ENCODE measurements at regions of chr6 and their contacts with region 1.

Region 1: DNA sequence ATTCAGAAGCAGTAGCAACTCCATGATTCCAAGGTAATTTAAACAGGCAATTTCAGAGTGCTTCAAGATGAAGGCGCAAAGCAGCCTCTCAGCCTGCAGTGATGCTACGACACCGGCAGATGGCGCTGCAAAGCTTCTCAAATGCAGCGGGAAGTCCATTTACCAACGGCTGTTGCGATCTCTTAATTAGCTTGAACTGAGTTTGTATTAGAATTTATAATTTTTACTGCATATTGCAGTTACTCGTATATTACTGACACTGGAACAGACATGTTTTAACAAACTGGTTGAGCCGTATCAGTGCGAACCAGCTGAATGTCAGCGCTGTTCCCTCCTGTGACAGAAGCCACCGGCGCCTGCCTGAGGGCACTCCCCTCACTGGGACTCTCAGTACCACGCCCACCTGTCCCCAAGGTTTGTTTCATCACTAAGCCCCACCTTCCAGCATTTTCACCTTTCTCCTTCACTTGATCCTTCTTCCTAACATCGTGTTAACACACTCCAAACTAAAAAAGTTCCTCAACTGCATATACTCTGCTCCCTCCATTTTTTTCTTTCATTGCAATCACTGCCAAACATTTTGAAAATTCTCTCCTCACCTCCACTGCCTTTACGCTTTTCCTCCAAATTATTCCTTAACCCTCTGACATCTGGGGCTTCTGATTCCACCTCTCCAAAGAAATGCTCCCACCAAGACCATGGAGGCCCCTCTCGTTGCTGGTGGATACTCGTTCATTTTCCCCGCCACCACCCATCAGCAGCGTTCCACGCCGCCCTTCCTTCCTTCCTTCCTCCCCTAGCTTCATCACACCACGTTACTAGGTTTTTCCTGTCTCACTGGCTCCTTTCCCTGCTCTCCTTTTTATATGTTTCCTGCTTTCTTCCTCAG is 14.5 kb downstream of the GNL1 start:
- DNase-seq: peak; percentile 88
- ATAC-seq: peak; percentile 72

Region 2: GRCh38 chr6:30483677-30484279 is 58.0 kb before region 1 on chr6:
- intact Hi-C with region 1: loop called (anchors 1 kb)
- DNase-seq: no peak
- ATAC-seq: no peak

Region 3: GRCh38 chr6:30599625-30600324 is 58.0 kb after region 1 on chr6:
- intact Hi-C with region 1: loop called (anchors 5 kb)
- DNase-seq: no peak
- ATAC-seq: no peak

Region 4: DNA sequence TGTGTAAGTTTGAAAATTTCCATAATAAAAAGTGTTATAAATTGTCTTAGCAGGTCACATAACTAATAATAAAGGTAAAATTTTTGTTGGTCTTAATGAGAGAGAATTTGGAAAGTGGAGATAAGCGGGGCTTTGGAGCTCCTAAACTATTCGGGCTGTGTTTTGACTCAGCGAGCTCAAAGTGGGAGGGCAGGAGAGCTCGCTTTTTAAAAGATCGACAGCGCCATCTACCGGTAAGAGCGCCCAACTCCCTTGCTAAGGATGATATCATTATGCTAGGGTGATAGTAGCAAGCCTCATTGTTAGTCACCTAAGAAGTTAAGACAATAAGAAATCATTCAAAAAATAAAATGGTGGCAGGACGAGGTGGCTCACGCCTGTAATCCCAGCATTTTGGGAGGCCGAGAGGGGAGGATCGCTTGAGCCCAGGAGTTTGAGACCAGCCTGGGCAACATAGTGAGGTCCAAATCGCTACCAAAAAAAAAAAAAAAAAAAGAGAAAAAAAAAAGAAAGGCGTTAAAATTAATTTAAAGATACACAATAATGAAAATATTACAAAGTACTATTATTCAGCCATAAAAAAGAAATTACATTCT is 545.8 kb after region 1 on chr6:
- intact Hi-C with region 1: loop called (anchors 2 kb)
- DNase-seq: peak; percentile 77
- ATAC-seq: peak; percentile 91